HepG2 (cell line): ENCODE measurements at regions of chr21 and their contacts with region 1.

Region 1: GRCh38 chr21:33558777-33559421 is 16.1 kb downstream of the SON start:
- DNase-seq: no peak
- ATAC-seq: no peak
- H3K4me3 ChIP-seq: no peak overlapping the region
- H3K27ac ChIP-seq: no peak overlapping the region
- H3K4me1 ChIP-seq: peaks cover 11% of the 10 kb centered on the region; the same call in 1 of the 2 replicates
- H3K27me3 ChIP-seq: no peaks in the 10 kb centered on the region; a peak in 1 of 5 replicates
- CTCF ChIP-seq: no peak
- EP300 ChIP-seq: no peak
- POLR2A ChIP-seq: no peak
- RAD21 ChIP-seq: no peak

Region 2: GRCh38 chr21:32507342-32507919 is 1051.5 kb before region 1 on chr21:
- CTCF ChIA-PET with region 1: no interaction called
- POLR2A ChIA-PET with region 1: no interaction called
- in situ Hi-C with region 1: no loop called
- intact Hi-C with region 1: no loop called
- DNase-seq: no peak
- ATAC-seq: no peak
- H3K4me3 ChIP-seq: no peak overlapping the region
- H3K27ac ChIP-seq: no peak overlapping the region
- H3K4me1 ChIP-seq: no peaks in the 10 kb centered on the region
- H3K27me3 ChIP-seq: no peaks in the 10 kb centered on the region
- CTCF ChIP-seq: no peak
- EP300 ChIP-seq: no peak
- POLR2A ChIP-seq: no peak
- RAD21 ChIP-seq: no peak

Region 3: GRCh38 chr21:32519945-32520874 is 1038.7 kb before region 1 on chr21:
- CTCF ChIA-PET with region 1: no interaction called
- POLR2A ChIA-PET with region 1: no interaction called
- in situ Hi-C with region 1: no loop called
- intact Hi-C with region 1: no loop called
- DNase-seq: no peak
- ATAC-seq: peak; percentile 41
- H3K4me3 ChIP-seq: no peak overlapping the region
- H3K27ac ChIP-seq: no peak overlapping the region
- H3K4me1 ChIP-seq: peaks cover 32% of the 10 kb centered on the region
- H3K27me3 ChIP-seq: no peaks in the 10 kb centered on the region
- CTCF ChIP-seq: no peak
- EP300 ChIP-seq: no peak
- POLR2A ChIP-seq: no peak
- RAD21 ChIP-seq: no peak

Region 4: GRCh38 chr21:33522953-33523349 is 35.9 kb before region 1 on chr21:
- CTCF ChIA-PET with region 1: no interaction called
- POLR2A ChIA-PET with region 1: no interaction called
- in situ Hi-C with region 1: no loop called
- intact Hi-C with region 1: loop called (anchors 2 kb)
- DNase-seq: no peak
- ATAC-seq: no peak
- H3K4me3 ChIP-seq: no peak overlapping the region; a peak in 1 of 6 replicates
- H3K27ac ChIP-seq: no peak overlapping the region
- H3K4me1 ChIP-seq: no peaks in the 10 kb centered on the region
- H3K27me3 ChIP-seq: no peaks in the 10 kb centered on the region
- CTCF ChIP-seq: no peak
- EP300 ChIP-seq: no peak
- POLR2A ChIP-seq: no peak
- RAD21 ChIP-seq: no peak

Region 5: GRCh38 chr21:33619726-33620125 is 60.8 kb after region 1 on chr21:
- CTCF ChIA-PET with region 1: no interaction called
- POLR2A ChIA-PET with region 1: no interaction called
- in situ Hi-C with region 1: no loop called
- intact Hi-C with region 1: no loop called
- DNase-seq: no peak
- ATAC-seq: no peak
- H3K4me3 ChIP-seq: no peak overlapping the region
- H3K27ac ChIP-seq: no peak overlapping the region
- H3K4me1 ChIP-seq: no peaks in the 10 kb centered on the region
- H3K27me3 ChIP-seq: no peaks in the 10 kb centered on the region
- CTCF ChIP-seq: no peak
- EP300 ChIP-seq: no peak
- POLR2A ChIP-seq: no peak
- RAD21 ChIP-seq: no peak

Region 6: GRCh38 chr21:33789697-33790096 is 230.8 kb after region 1 on chr21:
- CTCF ChIA-PET with region 1: no interaction called
- POLR2A ChIA-PET with region 1: no interaction called
- in situ Hi-C with region 1: no loop called
- intact Hi-C with region 1: no loop called
- DNase-seq: no peak
- ATAC-seq: no peak
- H3K4me3 ChIP-seq: no peak overlapping the region
- H3K27ac ChIP-seq: no peak overlapping the region
- H3K4me1 ChIP-seq: no peaks in the 10 kb centered on the region
- H3K27me3 ChIP-seq: no peaks in the 10 kb centered on the region
- CTCF ChIP-seq: no peak
- EP300 ChIP-seq: no peak
- POLR2A ChIP-seq: no peak
- RAD21 ChIP-seq: no peak